Endothelial cell of umbilical vein (primary cell): ENCODE measurements at regions of chr2 and their contacts with region 1.

Region 1: DNA sequence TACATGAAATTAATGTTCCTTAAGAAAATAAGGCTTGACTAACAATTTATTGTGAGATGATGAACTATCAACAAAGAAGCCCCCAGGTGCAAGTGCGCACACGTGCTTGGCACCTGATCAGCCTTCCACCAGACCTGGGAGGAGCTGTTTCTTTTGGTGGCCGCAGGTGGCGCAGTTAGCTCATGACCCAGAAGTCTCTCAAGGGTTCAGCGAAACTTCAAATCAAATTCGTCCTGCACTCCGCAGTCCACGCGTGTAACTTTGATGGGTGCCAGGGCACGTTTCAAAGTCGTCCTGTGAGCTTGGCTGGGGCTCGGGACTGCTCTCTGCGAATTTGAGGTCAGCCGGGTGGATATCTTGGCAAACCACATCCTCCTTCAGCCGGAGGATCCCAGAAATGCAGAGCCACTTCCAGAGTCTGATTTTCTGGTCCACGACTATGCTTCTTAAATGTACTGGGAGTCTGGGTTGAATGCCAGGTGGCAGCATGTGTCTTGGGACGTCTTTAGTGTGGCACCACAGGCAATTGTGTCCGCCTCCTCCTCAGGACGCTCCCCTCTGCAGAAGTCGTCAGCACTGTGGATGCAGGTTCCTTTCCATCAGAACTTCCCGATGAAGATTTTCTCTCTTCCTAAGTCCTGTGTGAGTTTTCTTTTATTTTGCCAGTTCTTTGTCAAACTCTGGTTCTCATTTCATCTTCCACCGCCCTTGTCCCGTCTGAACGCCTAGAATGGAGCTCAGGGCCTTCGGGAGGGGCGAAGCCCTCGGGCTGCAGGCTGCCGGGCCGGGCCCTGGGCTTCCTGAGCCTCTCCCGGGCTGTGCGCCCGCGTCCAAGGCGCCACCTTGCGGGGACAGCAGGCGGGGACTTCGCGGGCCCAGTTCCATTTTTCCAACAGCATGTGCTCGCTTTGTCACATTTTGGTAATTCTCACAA is 61.3 kb upstream of the RAPGEF4 start:
- DNase-seq: peak; percentile 45
- H3K4me3 ChIP-seq: no peak overlapping the region
- H3K27ac ChIP-seq: no peak overlapping the region
- H3K4me1 ChIP-seq: peaks cover 17% of the 10 kb centered on the region
- H3K27me3 ChIP-seq: no peaks in the 10 kb centered on the region
- CTCF ChIP-seq: peak; percentile 76 to 84
- POLR2A ChIP-seq: no peak

Region 2: GRCh38 chr2:172172513-172173173 is 501.7 kb before region 1 on chr2:
- CTCF ChIA-PET with region 1: interaction called, 4 read pairs
- POLR2A ChIA-PET with region 1: no interaction called
- dilution Hi-C with region 1: no loop called
- intact Hi-C with region 1: loop called (anchors 1 kb)
- DNase-seq: peak; percentile 52
- H3K4me3 ChIP-seq: peak overlapping the region; percentile 12 to 50 (median 50)
- H3K27ac ChIP-seq: no peak overlapping the region
- H3K4me1 ChIP-seq: peaks cover 4% of the 10 kb centered on the region
- H3K27me3 ChIP-seq: no peaks in the 10 kb centered on the region
- CTCF ChIP-seq: peak; percentile 83 to 90
- POLR2A ChIP-seq: no peak

Region 3: DNA sequence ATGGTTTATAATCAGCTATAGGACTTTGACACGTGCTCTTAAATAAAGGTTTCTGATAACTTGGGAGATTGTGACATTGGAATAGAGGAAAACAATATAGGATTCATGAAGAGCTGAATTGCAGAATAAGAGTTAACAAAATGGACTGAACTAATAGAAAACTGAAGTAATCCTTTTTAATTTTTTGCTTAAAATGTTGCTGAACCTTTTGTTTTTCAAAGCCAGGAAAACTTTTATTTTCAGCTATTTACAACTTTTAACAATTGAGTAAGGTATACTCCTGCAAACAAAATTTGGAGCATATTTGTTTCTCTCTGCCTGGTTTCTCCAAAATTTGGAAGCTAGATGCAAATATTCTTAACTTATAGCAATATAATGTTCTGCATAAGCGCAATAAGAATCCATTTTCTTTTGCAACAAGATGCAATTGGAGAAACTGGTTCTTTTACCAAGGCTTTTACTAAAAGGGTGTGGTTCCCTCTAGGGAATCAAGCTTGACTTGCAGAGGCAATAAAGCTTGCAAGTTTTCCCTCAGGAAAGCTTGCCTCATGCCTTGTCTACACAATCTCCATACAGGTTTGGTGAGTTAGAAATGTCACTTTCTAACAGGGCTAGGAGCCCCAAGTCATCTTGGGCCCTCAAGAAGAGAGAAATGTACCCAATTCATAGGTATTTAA is 128.8 kb before region 1 on chr2:
- CTCF ChIA-PET with region 1: no interaction called
- POLR2A ChIA-PET with region 1: no interaction called
- dilution Hi-C with region 1: no loop called
- intact Hi-C with region 1: no loop called
- DNase-seq: no peak
- H3K4me3 ChIP-seq: no peak overlapping the region
- H3K27ac ChIP-seq: no peak overlapping the region
- H3K4me1 ChIP-seq: no peaks in the 10 kb centered on the region
- H3K27me3 ChIP-seq: no peaks in the 10 kb centered on the region
- CTCF ChIP-seq: no peak
- POLR2A ChIP-seq: no peak

Region 4: DNA sequence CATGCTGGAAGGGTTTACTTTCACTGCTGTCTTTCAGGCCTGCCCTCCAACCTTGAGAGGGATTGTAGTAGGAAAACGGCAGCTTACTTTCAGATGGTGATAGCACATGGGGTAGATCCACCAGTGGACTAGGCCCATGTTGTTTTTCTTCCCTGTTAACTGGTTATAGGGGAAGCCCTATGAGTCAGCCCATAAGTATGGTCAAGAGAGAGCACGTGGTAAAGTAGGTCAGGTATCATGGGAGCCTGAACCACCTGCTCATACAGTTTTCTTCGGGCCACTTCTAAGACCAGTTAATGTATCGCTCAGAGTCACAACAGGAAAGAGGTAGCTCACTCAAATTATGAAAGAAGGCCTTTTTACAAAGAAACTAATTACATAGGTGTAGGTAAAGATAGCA is 85.4 kb before region 1 on chr2:
- CTCF ChIA-PET with region 1: interaction called, 75 read pairs
- POLR2A ChIA-PET with region 1: no interaction called
- dilution Hi-C with region 1: no loop called
- intact Hi-C with region 1: loop called (anchors 1 kb)
- DNase-seq: no peak
- H3K4me3 ChIP-seq: no peak overlapping the region
- H3K27ac ChIP-seq: no peak overlapping the region
- H3K4me1 ChIP-seq: no peaks in the 10 kb centered on the region
- H3K27me3 ChIP-seq: no peaks in the 10 kb centered on the region
- CTCF ChIP-seq: no peak
- POLR2A ChIP-seq: no peak

Region 5: GRCh38 chr2:172596776-172597175 is 77.5 kb before region 1 on chr2:
- CTCF ChIA-PET with region 1: interaction called, 75 read pairs
- POLR2A ChIA-PET with region 1: no interaction called
- dilution Hi-C with region 1: no loop called
- intact Hi-C with region 1: loop called (anchors 1 kb)
- DNase-seq: no peak
- H3K4me3 ChIP-seq: no peak overlapping the region
- H3K27ac ChIP-seq: no peak overlapping the region
- H3K4me1 ChIP-seq: peaks cover 10% of the 10 kb centered on the region
- H3K27me3 ChIP-seq: no peaks in the 10 kb centered on the region
- CTCF ChIP-seq: no peak
- POLR2A ChIP-seq: no peak

Region 6: DNA sequence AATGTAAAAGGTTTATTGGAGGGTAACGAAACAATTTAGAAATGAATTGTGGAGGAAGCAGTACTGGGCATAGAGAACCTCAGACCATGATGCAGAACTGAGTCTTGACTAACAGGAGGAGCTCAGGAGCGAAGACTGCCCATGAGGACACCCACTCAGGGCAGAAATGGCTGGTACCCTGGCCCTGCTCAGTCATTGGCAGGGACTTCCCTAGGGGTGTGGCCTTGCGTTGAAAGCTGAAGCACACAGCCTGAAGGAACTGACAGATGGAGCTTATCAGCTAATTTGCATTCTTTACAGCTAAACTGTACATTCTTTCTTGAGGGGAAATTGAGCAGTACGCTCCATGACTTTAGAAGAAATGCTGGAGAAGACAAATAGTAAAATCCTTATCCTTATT is 61.3 kb before region 1 on chr2:
- CTCF ChIA-PET with region 1: interaction called, 11 read pairs
- POLR2A ChIA-PET with region 1: no interaction called
- dilution Hi-C with region 1: no loop called
- intact Hi-C with region 1: no loop called
- DNase-seq: no peak
- H3K4me3 ChIP-seq: no peak overlapping the region
- H3K27ac ChIP-seq: no peak overlapping the region
- H3K4me1 ChIP-seq: no peaks in the 10 kb centered on the region
- H3K27me3 ChIP-seq: no peaks in the 10 kb centered on the region
- CTCF ChIP-seq: no peak
- POLR2A ChIP-seq: no peak

Region 7: DNA sequence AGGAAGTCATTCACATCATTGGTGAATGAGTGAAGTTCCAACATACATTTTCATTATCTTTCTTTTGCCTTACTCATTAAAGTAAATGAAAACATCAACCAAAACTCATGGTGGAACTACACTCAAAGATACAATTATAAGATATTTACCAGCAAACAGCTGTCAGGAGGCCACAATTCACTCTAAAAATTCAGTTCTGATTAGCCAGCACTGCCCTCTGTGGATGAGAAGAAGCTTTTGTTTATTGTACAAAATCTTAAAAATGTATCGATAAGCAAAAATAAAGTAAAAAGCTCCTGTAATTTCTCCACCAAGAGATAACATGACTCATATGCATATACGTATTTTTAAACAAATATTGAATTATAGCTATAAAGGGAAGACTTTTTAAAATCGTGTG is 12.2 kb before region 1 on chr2:
- CTCF ChIA-PET with region 1: interaction called, 11 read pairs
- POLR2A ChIA-PET with region 1: no interaction called
- dilution Hi-C with region 1: no loop called
- intact Hi-C with region 1: no loop called
- DNase-seq: no peak
- H3K4me3 ChIP-seq: no peak overlapping the region
- H3K27ac ChIP-seq: no peak overlapping the region
- H3K4me1 ChIP-seq: no peaks in the 10 kb centered on the region
- H3K27me3 ChIP-seq: no peaks in the 10 kb centered on the region
- CTCF ChIP-seq: no peak
- POLR2A ChIP-seq: no peak

Region 8: GRCh38 chr2:172693037-172693436 is 18.7 kb after region 1 on chr2:
- CTCF ChIA-PET with region 1: interaction called, 11 read pairs
- POLR2A ChIA-PET with region 1: no interaction called
- dilution Hi-C with region 1: no loop called
- intact Hi-C with region 1: no loop called
- DNase-seq: peak; percentile 98
- H3K4me3 ChIP-seq: no peak overlapping the region
- H3K27ac ChIP-seq: no peak overlapping the region
- H3K4me1 ChIP-seq: peaks cover 17% of the 10 kb centered on the region
- H3K27me3 ChIP-seq: no peaks in the 10 kb centered on the region
- CTCF ChIP-seq: no peak
- POLR2A ChIP-seq: no peak

Region 9: GRCh38 chr2:172726172-172726735 is 52.0 kb after region 1 on chr2:
- CTCF ChIA-PET with region 1: no interaction called
- POLR2A ChIA-PET with region 1: no interaction called
- dilution Hi-C with region 1: no loop called
- intact Hi-C with region 1: no loop called
- DNase-seq: peak; percentile 31
- H3K4me3 ChIP-seq: no peak overlapping the region
- H3K27ac ChIP-seq: no peak overlapping the region
- H3K4me1 ChIP-seq: no peaks in the 10 kb centered on the region
- H3K27me3 ChIP-seq: peaks cover 0 to 5% of the 10 kb centered on the region in 2 experiments
- CTCF ChIP-seq: no peak
- POLR2A ChIP-seq: no peak